ENCODE measurements at regions of chr6 and their contacts with region 1.

Region 1: DNA sequence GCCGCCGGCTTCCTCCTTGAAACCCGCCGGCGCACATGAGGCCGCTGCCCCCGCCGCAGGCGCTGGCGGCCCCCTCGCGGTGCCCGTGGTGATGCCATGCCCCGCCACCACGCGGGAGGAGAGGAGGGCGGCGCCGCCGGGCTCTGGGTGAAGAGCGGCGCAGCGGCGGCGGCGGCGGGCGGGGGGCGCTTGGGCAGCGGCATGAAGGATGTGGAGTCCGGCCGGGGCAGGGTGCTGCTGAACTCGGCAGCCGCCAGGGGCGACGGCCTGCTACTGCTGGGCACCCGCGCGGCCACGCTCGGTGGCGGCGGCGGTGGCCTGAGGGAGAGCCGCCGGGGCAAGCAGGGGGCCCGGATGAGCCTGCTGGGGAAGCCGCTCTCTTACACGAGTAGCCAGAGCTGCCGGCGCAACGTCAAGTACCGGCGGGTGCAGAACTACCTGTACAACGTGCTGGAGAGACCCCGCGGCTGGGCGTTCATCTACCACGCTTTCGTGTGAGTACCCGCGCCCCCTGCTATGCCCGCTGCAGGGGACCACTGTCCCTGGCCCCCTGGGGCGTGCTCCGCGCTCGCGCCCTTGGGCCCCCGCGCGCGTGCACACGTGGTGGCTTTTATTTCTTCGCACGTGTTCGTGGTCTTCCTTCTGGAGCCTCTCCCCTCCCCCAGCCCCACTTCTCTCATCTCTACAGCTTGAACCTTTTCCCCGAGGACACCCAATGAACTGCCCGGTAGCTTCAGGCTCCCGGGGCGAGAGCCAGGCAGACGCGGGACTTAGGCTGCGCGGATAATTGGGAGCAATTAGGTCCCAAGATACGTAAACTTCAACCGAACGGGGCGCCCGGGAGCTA is 453 bp downstream of the KCNQ5 start:
- H3K4me3 ChIP-seq: peak overlapping the region; percentile 70
- H3K27ac ChIP-seq: peak overlapping the region; percentile 66; the same call in 1 of the 2 replicates
- H3K4me1 ChIP-seq: no peaks in the 10 kb centered on the region
- CTCF ChIP-seq: peak; percentile 81

Region 2: GRCh38 chr6:72554761-72555221 is 67.5 kb before region 1 on chr6:
- CTCF ChIA-PET with region 1: no interaction called
- POLR2A ChIA-PET with region 1: no interaction called
- H3K4me3 ChIP-seq: no peak overlapping the region
- H3K27ac ChIP-seq: no peak overlapping the region
- H3K4me1 ChIP-seq: no peaks in the 10 kb centered on the region
- CTCF ChIP-seq: no peak

Region 3: DNA sequence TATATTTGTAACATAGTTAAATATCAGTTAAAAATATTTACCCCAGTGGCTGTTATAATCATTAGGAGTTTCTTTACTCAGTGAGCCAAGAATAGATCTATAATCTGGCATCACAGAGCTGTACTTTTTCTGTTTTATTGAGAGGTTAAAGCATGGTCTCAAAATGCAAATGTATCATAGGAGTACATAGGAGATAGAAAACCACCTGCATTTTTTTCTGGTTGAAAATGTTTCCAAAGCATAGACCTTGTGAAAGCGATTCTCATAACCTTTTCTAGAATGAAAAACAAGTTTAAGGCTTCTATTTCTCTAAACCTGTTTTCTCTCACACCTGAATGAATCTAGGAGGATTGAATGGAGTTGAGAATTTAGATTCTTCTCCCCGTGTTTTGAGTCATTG is 13.9 kb after region 1 on chr6:
- CTCF ChIA-PET with region 1: interaction called, 13 read pairs
- POLR2A ChIA-PET with region 1: no interaction called
- H3K4me3 ChIP-seq: no peak overlapping the region
- H3K27ac ChIP-seq: no peak overlapping the region
- H3K4me1 ChIP-seq: no peaks in the 10 kb centered on the region
- CTCF ChIP-seq: no peak

Region 4: DNA sequence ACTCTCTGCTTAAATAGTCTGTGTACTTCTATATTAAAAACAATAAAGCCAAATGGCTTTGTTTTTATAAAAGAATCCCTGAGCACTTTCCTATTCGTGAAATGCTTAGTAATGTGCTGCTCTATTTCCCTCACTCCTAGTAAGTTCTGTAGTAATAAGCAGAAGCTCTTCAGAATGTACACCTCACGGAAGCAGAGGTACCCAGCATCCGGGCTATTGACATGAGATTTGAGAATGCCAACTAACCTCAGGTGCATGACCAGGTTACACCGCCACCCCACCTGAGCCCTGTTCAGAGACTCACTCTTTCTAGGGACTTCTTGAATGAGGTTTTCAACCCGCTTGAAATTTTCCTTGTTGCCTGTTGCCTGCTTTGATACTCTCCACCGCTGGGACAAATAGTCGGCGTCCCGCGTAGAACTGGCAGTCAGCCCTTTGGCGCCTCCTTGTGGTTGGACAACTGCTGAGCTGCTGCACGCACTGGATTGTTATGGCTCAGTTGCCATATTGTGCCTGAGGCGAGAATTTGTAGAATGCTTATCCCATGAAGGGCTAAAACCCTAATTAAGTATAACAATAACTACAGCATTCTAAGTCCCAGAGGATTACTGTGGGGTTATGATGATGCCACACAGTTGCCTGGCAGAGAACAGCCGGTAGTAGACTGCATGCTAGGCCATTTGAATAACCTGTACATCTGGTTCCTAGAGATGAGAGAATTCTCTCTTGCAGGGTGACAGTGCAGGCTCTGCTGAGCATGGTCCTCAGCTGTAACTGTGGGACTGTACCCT is 507.5 kb after region 1 on chr6:
- CTCF ChIA-PET with region 1: interaction called, 160 read pairs
- POLR2A ChIA-PET with region 1: no interaction called
- H3K4me3 ChIP-seq: no peak overlapping the region
- H3K27ac ChIP-seq: no peak overlapping the region
- H3K4me1 ChIP-seq: no peaks in the 10 kb centered on the region
- CTCF ChIP-seq: peak; percentile 91

Measured in HEK293 (cell line).